ENCODE measurements at regions of chr10 and their contacts with region 1.

Region 1: DNA sequence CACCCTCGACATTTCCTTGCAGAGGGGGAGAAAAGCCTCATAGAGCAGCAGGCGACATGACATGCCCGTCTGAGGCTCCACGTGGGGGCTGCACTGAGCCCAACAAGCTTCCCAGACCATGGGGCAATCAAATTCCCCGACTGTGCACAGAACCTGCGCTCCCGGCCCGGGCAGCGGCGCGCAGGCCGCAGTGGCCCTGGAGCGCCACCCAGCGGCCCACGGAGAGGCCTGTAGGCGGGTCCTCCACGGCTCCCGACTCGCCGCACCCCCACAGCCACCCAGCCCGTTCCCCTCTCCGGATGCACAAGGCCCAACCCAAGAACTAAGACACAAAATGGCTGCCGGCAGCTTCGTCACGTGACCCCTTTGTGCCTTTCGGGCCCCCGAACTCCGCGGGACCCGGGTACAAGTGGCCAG is 816 bp downstream of the EPC1 start:
- DNase-seq: peak; percentile 95 to 97
- ATAC-seq: peak; percentile 96 to 99 (median 97)
- H3K4me3 ChIP-seq: peak overlapping the region; percentile 87 to 99 (median 93)
- H3K27ac ChIP-seq: peak overlapping the region; percentile 100
- H3K4me1 ChIP-seq: peaks cover 6 to 79% (median 64%) of the 10 kb centered on the region in 9 donors
- H3K27me3 ChIP-seq: no peaks in the 10 kb centered on the region
- CTCF ChIP-seq: peak; percentile 96 to 100 (median 98)

Region 2: GRCh38 chr10:31928549-31929260 is 417.4 kb before region 1 on chr10 and contains the start of gene ARHGAP12:
- intact Hi-C with region 1: loop called in 1 of 10 experiments (anchors 2 kb)
- DNase-seq: peak; percentile 91 to 94
- ATAC-seq: peak; percentile 95 to 98 (median 97)
- H3K4me3 ChIP-seq: peak within 1 kb of the TSS; percentile 53 to 96 (median 89)
- H3K27ac ChIP-seq: peak within 1 kb of the TSS; percentile 90 to 98 (median 97)
- H3K4me1 ChIP-seq: peaks cover 6 to 42% (median 25%) of the 10 kb centered on the region in 9 donors
- H3K27me3 ChIP-seq: no peaks in the 10 kb centered on the region
- CTCF ChIP-seq: no peak
- total RNA-seq, gene ARHGAP12: 16.7 to 25.6 (median 21.0) TPM

Region 3: GRCh38 chr10:32190890-32191491 is 155.2 kb before region 1 on chr10:
- intact Hi-C with region 1: loop called in 2 of 10 experiments (anchors 5 kb)
- DNase-seq: no peak
- ATAC-seq: peak in 2 of 8 donors; percentile 31 to 34
- H3K4me3 ChIP-seq: no peak overlapping the region
- H3K27ac ChIP-seq: no peak overlapping the region
- H3K4me1 ChIP-seq: peaks cover 0 to 11% (median 0%) of the 10 kb centered on the region in 9 donors
- H3K27me3 ChIP-seq: no peaks in the 10 kb centered on the region
- CTCF ChIP-seq: peak; percentile 56 to 84 (median 75)

Region 4: DNA sequence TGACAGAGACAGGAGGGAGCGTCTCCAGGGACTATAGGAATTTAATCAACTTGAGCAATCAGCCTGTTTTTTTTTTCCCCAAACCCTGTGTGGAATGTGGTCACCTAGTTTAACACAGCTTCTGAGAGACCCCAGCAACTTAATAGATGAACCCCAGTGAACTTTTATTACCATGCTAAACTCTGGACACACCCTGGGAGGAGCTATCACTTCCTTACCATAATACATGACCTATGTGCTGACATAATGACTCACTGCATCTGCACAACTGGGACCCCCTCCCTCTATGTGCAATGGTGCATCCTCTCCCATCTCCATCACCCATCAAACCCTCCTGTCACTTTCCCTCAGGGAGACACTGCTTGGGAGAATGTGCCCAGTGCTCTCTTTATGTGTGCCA is 82.8 kb before region 1 on chr10:
- intact Hi-C with region 1: loop called in 5 of 10 experiments (anchors 5 to 10 kb)
- DNase-seq: no peak
- ATAC-seq: peak in 1 of 8 donors; percentile 25
- H3K4me3 ChIP-seq: no peak overlapping the region
- H3K27ac ChIP-seq: no peak overlapping the region
- H3K4me1 ChIP-seq: peaks cover 0 to 2% (median 0%) of the 10 kb centered on the region in 9 donors
- H3K27me3 ChIP-seq: no peaks in the 10 kb centered on the region
- CTCF ChIP-seq: no peak

Measured in heart right ventricle (tissue), 16 donors.